ENCODE measurements at regions of chr5 and their contacts with region 1.

Region 1: GRCh38 chr5:172188033-172188892 is at the start of gene STK10:
- DNase-seq: peak; percentile 91
- H3K4me3 ChIP-seq: peak within 1 kb of the TSS; percentile 69 to 89 (median 74)
- H3K27ac ChIP-seq: peak within 1 kb of the TSS; percentile 74
- H3K4me1 ChIP-seq: peaks cover 16% of the 10 kb centered on the region
- H3K27me3 ChIP-seq: peaks cover 0 to 2% of the 10 kb centered on the region in 2 experiments
- CTCF ChIP-seq: peak; percentile 95 to 96
- POLR2A ChIP-seq: peak; percentile 52
- total RNA-seq, gene STK10: 47.2 and 57.9 TPM in 2 replicates

Region 2: DNA sequence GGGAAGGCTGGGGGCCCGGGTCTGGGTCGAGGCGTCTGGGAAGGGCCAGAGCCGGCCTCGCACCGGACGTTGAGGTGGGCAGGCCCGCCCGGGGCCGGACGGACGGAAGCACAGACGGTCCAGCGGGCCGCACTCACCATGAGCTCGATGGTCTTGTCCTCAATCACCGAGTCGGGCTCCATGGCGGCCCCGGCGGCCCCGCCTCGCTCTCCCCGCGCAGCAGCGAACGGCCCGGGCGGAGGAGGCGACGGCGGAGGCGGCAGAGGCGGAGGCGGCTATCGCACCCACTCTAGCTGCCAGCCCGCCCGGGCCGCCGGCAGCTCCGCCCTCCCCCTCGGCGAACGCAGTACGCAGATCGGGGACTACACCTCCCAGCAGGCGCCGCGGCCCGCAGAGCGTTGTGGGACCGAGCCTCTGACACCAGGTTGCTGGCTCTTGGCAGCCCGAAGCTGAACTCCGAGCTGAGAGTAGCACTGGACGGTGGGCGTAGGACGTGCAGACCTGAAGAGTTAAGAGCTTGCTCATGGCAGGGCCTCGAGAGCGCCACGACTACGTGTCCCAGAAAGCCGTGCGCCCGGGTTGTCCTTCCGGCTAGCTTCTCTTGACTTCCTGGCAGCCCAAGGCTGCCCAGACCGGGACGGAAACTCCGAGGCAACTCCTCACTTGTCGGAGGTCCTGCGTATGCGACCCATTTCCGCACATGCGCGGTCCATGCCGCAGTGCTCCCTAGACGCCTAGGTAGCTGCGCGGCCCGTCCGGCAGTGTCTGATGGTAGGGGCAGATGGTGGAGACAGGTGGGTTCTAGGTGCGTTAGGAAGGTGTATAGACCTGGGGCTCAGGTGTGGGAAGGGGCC is 181.7 kb before region 1 on chr5 and contains the start of gene FBXW11:
- CTCF ChIA-PET with region 1: interaction called, 28 read pairs
- POLR2A ChIA-PET with region 1: interaction called, 3 read pairs
- dilution Hi-C with region 1: no loop called
- intact Hi-C with region 1: loop called (anchors 1 kb)
- DNase-seq: peak; percentile 95
- H3K4me3 ChIP-seq: peak within 1 kb of the TSS; percentile 66 to 98 (median 88)
- H3K27ac ChIP-seq: peak within 1 kb of the TSS; percentile 78
- H3K4me1 ChIP-seq: peaks cover 44% of the 10 kb centered on the region
- H3K27me3 ChIP-seq: no peaks in the 10 kb centered on the region
- CTCF ChIP-seq: no peak
- POLR2A ChIP-seq: peak; percentile 96
- total RNA-seq, gene FBXW11: 42.3 and 44.7 TPM in 2 replicates

Region 3: DNA sequence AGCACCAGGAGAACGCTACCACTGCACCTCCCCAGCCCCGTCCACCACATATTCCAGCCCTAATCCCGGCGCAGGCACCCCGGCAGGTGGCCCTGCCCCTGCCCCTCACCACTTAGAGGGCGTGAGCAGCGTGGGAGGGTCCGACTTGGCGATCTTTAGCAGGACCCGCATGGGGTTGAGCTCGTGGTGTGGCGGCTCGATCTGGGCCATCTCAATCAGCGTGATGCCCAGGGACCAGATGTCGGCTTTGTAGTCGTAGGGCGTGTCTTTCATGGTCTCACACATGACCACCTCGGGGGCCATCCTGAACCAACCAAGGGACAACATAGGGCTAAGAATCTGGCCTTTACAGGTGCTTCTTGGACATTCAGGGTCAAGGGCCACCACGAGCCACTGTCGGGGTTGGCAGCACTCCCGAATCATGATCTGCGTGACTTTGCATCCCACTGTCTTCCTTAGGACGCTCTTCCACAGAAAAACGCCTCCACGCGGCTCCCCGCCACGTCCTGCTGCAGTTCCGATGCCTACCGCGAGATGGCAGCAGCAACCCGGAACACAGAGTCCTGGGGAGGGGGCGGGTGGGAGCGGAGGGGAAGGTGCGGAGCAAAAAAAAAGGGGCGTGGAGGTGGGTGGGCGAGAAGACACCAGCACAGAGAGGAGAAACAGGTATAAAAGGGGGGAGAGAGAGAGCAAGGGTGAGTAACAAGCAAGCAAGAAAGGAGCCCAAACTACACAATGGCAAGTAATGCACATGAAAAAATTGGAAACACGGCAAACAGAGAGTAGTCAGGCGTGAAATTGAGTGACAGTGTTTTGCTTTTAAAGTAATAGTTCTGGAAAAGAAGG is 81.5 kb before region 1 on chr5:
- CTCF ChIA-PET with region 1: interaction called, 142 read pairs
- POLR2A ChIA-PET with region 1: interaction called, 4 read pairs
- dilution Hi-C with region 1: no loop called
- intact Hi-C with region 1: loop called (anchors 1 kb)
- DNase-seq: peak; percentile 46
- H3K4me3 ChIP-seq: no peak overlapping the region
- H3K27ac ChIP-seq: no peak overlapping the region
- H3K4me1 ChIP-seq: peaks cover 34% of the 10 kb centered on the region
- H3K27me3 ChIP-seq: no peaks in the 10 kb centered on the region
- CTCF ChIP-seq: peak; percentile 78 to 97
- POLR2A ChIP-seq: no peak

Region 4: DNA sequence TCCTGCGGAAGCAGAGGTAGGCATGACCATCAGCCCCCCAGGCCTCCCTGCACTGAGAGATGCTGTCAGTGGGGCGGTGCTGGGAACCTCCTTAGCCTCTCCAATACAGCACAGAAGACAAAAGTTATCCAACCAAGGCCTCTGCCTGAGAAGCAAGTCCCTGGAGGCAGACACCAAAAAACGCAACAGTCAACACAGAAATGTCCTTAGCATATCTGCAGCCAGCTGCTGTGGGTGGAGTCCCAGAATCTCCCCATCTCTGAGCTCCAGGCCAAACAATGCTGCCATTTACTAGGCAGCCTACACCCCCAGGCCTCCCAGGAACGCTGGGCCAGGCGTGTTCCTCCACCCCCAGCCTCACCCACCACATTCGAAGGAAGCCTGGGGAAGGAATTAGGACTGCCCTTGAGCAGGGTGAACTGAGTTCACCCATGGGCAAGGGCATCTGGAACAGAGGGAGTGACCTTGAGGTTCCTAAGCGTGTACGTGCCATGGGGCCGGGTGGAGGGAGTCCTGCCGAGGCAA is 43.9 kb before region 1 on chr5:
- CTCF ChIA-PET with region 1: interaction called, 4 read pairs
- POLR2A ChIA-PET with region 1: no interaction called
- dilution Hi-C with region 1: no loop called
- intact Hi-C with region 1: loop called (anchors 5 kb)
- DNase-seq: no peak
- H3K4me3 ChIP-seq: no peak overlapping the region
- H3K27ac ChIP-seq: no peak overlapping the region
- H3K4me1 ChIP-seq: peaks cover 2% of the 10 kb centered on the region
- H3K27me3 ChIP-seq: no peaks in the 10 kb centered on the region
- CTCF ChIP-seq: no peak
- POLR2A ChIP-seq: no peak

Region 5: DNA sequence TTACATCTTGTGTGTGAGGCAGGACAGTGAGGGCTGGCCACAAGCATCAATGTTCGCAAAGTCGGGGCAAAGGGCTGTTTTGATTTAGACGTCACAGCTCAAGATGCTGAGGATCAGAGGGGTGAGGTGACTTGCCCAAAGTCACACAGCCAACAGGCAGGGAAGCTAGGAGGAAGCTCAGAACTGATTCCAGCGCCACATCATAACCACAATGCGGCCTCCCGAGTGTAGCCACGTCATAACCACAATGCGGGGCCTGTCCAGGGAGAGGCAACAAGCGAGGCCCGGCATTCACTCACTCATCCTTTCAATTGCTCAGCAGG is 14.5 kb before region 1 on chr5:
- CTCF ChIA-PET with region 1: interaction called, 13 read pairs
- POLR2A ChIA-PET with region 1: no interaction called
- dilution Hi-C with region 1: no loop called
- intact Hi-C with region 1: no loop called
- DNase-seq: no peak
- H3K4me3 ChIP-seq: no peak overlapping the region
- H3K27ac ChIP-seq: no peak overlapping the region
- H3K4me1 ChIP-seq: peaks cover 10% of the 10 kb centered on the region
- H3K27me3 ChIP-seq: no peaks in the 10 kb centered on the region
- CTCF ChIP-seq: no peak
- POLR2A ChIP-seq: no peak

Region 6: GRCh38 chr5:172283020-172283861 is 95.0 kb after region 1 on chr5 and contains the start of gene UBTD2:
- CTCF ChIA-PET with region 1: interaction called, 25 read pairs
- POLR2A ChIA-PET with region 1: interaction called, 3 read pairs
- dilution Hi-C with region 1: no loop called
- intact Hi-C with region 1: loop called (anchors 1 kb)
- DNase-seq: peak; percentile 79
- H3K4me3 ChIP-seq: peak within 1 kb of the TSS; percentile 73 to 93 (median 92)
- H3K27ac ChIP-seq: peak within 1 kb of the TSS; percentile 82
- H3K4me1 ChIP-seq: peaks cover 21% of the 10 kb centered on the region
- H3K27me3 ChIP-seq: no peaks in the 10 kb centered on the region
- CTCF ChIP-seq: peak; percentile 35 to 65
- POLR2A ChIP-seq: peak; percentile 84
- total RNA-seq, gene UBTD2: 21.6 and 22.6 TPM in 2 replicates

Region 7: DNA sequence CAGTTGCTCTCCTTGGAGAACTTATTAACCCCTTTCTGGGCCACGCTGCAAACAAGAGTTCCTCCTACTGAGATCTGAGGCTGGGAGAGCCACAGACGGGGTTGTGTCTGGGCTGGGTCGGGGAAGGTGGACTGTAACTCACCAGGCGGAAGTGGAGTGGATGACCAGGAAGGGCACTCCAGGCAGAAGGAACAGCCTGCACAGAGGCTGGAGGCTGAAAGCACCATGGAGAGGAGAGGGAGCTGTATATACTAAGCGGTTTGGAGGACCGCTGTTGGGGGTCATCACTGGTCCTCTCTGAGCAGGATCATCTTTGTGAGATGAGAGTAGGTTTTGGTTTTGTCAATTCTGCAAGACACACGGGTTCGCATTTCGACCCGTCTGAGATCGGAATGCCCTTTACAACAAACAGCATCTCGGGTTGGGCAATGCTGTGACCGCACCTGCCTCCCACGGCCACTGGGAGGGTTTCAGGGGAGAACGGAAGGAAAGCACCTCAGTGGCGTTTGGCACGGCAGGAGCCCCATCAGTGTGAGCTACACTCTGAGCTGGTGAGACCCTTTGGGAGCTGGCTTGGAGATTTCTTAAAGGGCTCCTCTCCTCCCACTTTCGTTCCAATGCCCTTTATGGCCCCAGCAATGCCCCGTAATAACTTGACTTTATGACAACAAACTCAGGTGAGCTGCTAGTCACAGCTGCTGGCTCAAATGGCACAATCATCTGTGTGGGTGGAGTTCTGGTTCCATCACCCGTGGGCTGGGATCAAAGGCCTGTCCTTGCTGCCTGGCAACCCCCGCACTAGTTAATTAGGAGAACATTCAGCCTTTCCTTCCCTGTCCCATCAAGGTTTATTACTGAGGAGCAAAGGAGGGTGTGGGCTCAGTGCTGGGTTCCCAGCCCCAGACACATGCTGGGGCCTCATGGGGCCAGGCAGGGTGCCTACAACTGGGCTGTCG is 434.1 kb after region 1 on chr5:
- CTCF ChIA-PET with region 1: no interaction called
- POLR2A ChIA-PET with region 1: no interaction called
- dilution Hi-C with region 1: no loop called
- intact Hi-C with region 1: no loop called
- DNase-seq: no peak
- H3K4me3 ChIP-seq: no peak overlapping the region
- H3K27ac ChIP-seq: no peak overlapping the region
- H3K4me1 ChIP-seq: no peaks in the 10 kb centered on the region
- H3K27me3 ChIP-seq: no peaks in the 10 kb centered on the region
- CTCF ChIP-seq: no peak
- POLR2A ChIP-seq: no peak

Region 8: DNA sequence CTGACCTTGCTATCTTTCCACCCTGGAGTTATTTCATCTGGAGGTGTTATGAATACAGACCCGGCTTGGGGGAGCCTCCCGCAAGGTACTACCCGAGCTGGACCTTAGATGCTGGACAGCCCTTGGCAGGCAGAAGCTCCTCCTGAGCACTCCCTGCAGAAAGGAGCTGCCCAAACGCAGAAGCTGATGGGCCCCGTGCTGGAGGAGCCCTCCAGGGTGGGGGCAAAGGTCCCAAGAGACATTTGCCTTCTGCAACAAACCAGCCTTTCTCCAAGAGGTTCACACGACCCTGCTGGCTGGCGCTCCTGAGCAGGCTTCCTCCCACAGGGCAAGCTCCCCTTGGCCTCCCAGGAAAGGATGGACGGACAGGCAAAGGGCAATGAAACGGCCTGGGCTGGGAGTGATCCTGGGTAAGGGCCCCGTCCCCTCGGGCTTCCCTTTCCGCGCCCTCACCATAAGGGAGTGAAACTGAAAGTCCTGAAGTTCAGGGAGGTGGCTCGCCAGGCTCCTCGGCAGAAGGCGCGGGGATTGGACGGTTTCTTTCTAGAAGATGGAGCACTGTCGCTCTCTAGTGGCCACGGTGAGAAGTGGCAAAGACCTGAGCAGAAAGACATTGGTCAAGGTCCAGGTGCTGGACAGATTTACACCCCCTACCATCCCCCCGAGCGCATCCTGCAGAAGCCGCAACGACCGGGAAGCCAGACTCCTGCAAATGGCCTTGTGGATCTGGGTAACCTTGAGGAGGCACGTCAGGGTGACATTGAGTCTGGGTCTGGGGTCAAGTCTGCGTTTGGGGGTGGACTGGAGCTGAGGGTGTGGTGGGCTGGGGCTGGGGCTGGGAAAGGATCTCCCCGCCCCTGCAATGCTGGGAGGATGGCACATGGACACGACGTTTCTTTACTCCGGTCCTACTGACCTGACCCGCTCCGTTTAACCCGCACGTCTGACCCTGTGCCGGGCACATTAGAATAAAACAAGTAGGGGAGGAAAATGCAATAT is 509.2 kb after region 1 on chr5:
- CTCF ChIA-PET with region 1: no interaction called
- POLR2A ChIA-PET with region 1: no interaction called
- dilution Hi-C with region 1: no loop called
- intact Hi-C with region 1: loop called (anchors 1 kb)
- DNase-seq: peak; percentile 82
- H3K4me3 ChIP-seq: peak overlapping the region; percentile 8 to 47 (median 36)
- H3K27ac ChIP-seq: no peak overlapping the region
- H3K4me1 ChIP-seq: peaks cover 5% of the 10 kb centered on the region
- H3K27me3 ChIP-seq: peaks cover 6 to 11% of the 10 kb centered on the region in 2 experiments
- CTCF ChIP-seq: peak; percentile 87 to 91
- POLR2A ChIP-seq: no peak

Measured in endothelial cell of umbilical vein (primary cell).